AG04450 (cell line): ENCODE measurements at regions of chr2 and their contacts with region 1.

Region 1: GRCh38 chr2:119523952-119524694 is at the start of gene SCTR:
- DNase-seq: no peak
- H3K4me3 ChIP-seq: no peak within 1 kb of the TSS
- H3K27ac ChIP-seq: no peak within 1 kb of the TSS
- H3K27me3 ChIP-seq: peaks cover 23% of the 10 kb centered on the region
- CTCF ChIP-seq: no peak
- polyA plus RNA-seq, gene SCTR: not detected in 2 replicates

Region 2: GRCh38 chr2:119862127-119862889 is 338.2 kb after region 1 on chr2:
- CTCF ChIA-PET with region 1: no interaction called
- POLR2A ChIA-PET with region 1: interaction called, 14 read pairs
- DNase-seq: no peak
- H3K4me3 ChIP-seq: no peak overlapping the region
- H3K27ac ChIP-seq: no peak overlapping the region
- H3K27me3 ChIP-seq: no peaks in the 10 kb centered on the region
- CTCF ChIP-seq: no peak